ENCODE measurements at regions of chr2 and their contacts with region 1.

Region 1: DNA sequence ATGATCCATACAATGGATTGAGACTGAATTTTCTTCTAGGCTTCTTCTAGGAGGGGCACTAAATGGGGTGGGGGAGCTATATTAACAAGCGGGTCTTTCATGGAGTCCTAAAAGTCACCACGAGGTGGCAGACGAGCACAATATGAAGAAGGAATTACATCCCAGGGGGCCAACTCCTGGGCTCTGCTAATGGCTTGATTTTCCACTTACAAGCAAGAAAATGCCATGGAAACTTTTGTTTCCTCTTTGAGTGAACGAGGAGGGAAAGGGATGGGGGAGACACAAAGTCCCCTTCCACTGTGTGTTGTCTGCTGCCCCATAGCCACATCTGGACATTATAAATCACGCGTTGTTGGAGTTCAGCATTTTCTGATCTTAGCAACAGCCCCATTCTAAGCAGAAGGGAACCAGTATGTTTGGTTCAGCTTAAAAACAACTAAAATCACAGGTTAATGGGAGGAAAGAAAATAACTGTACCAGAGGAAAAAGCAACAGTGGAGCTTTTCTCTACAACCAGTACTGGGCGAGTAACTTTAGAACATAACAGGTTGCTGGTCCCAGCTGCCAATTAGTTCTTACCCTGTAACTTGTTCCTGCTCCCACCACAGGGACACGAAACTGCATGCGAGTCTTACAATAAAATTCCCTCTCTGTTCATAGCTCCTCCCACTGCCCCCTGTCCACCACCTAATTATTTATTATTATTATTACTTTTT is 285.0 kb upstream of the PARD3B start:
- DNase-seq: peak; percentile 57 to 84
- H3K4me3 ChIP-seq: no peak overlapping the region
- H3K27ac ChIP-seq: no peak overlapping the region
- H3K4me1 ChIP-seq: peaks cover 2 to 11% (median 6%) of the 10 kb centered on the region in 4 experiments; a peak in 4 of 7 replicates
- H3K27me3 ChIP-seq: no peaks in the 10 kb centered on the region
- CTCF ChIP-seq: peak; percentile 34 to 91 (median 73)
- EP300 ChIP-seq: no peak
- POLR2A ChIP-seq: no peak
- RAD21 ChIP-seq: peak; percentile 89

Region 2: GRCh38 chr2:204108330-204108751 is 152.0 kb before region 1 on chr2:
- CTCF ChIA-PET with region 1: interaction called, 46 read pairs
- POLR2A ChIA-PET with region 1: no interaction called
- DNase-seq: no peak
- H3K4me3 ChIP-seq: no peak overlapping the region
- H3K27ac ChIP-seq: no peak overlapping the region
- H3K4me1 ChIP-seq: peaks cover 0 to 5% (median 0%) of the 10 kb centered on the region in 4 experiments; a peak in 3 of 7 replicates
- H3K27me3 ChIP-seq: no peaks in the 10 kb centered on the region
- CTCF ChIP-seq: peak; percentile 46 to 59 (median 58)
- EP300 ChIP-seq: no peak
- POLR2A ChIP-seq: no peak
- RAD21 ChIP-seq: peak; percentile 78 to 82

Region 3: GRCh38 chr2:204177977-204178540 is 82.3 kb before region 1 on chr2:
- CTCF ChIA-PET with region 1: interaction called, 13 read pairs
- POLR2A ChIA-PET with region 1: no interaction called
- DNase-seq: peak; percentile 29 to 86
- H3K4me3 ChIP-seq: no peak overlapping the region
- H3K27ac ChIP-seq: no peak overlapping the region
- H3K4me1 ChIP-seq: no peaks in the 10 kb centered on the region
- H3K27me3 ChIP-seq: peaks cover 0 to 1% (median 0%) of the 10 kb centered on the region in 4 experiments; a peak in 1 of 7 replicates
- CTCF ChIP-seq: peak; percentile 41 to 70 (median 64)
- EP300 ChIP-seq: no peak
- POLR2A ChIP-seq: no peak
- RAD21 ChIP-seq: peak; percentile 56 to 70

Region 4: GRCh38 chr2:204289066-204289465 is 28.7 kb after region 1 on chr2:
- CTCF ChIA-PET with region 1: interaction called, 17 read pairs
- POLR2A ChIA-PET with region 1: no interaction called
- DNase-seq: no peak
- H3K4me3 ChIP-seq: no peak overlapping the region
- H3K27ac ChIP-seq: no peak overlapping the region
- H3K4me1 ChIP-seq: peaks cover 0 to 2% (median 1%) of the 10 kb centered on the region in 4 experiments; a peak in 3 of 7 replicates
- H3K27me3 ChIP-seq: no peaks in the 10 kb centered on the region; a peak in 1 of 7 replicates
- CTCF ChIP-seq: no peak
- EP300 ChIP-seq: no peak
- POLR2A ChIP-seq: no peak
- RAD21 ChIP-seq: no peak

Region 5: GRCh38 chr2:204312105-204312504 is 51.8 kb after region 1 on chr2:
- CTCF ChIA-PET with region 1: interaction called, 10 read pairs
- POLR2A ChIA-PET with region 1: no interaction called
- DNase-seq: no peak
- H3K4me3 ChIP-seq: no peak overlapping the region
- H3K27ac ChIP-seq: no peak overlapping the region
- H3K4me1 ChIP-seq: peaks cover 2 to 23% (median 12%) of the 10 kb centered on the region in 4 experiments; a peak in 6 of 7 replicates
- H3K27me3 ChIP-seq: no peaks in the 10 kb centered on the region
- CTCF ChIP-seq: no peak
- EP300 ChIP-seq: no peak
- POLR2A ChIP-seq: no peak
- RAD21 ChIP-seq: no peak

Region 6: DNA sequence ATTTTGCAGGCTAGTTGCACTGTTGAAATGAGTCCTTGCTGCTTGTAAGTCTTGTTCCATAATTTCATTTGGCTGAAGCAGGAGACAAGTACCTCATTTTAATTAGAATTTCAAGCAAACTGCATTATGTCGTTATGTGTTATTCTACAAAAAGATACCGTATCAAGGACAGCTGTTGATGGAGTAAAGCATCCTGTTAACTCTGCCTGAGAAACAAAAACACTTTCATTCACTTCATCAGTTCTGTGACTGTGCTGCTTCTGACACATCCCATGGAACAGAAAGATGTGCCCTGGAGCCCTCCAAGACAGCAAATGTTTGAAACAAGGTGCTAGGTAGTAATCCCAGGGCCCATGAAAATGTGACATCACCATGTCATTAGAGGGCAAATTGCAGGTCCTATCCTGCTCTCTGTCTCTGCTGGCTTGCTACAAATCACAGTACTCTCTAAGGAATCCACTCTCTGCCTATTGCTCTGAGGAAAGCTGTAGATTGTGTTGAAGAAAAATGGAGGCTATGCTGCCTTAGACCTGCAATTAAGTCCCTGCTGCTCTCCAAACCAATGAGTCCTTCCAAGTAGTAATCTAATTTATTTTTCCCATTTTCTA is 75.2 kb after region 1 on chr2:
- CTCF ChIA-PET with region 1: interaction called, 11 read pairs
- POLR2A ChIA-PET with region 1: no interaction called
- DNase-seq: no peak
- H3K4me3 ChIP-seq: no peak overlapping the region
- H3K27ac ChIP-seq: no peak overlapping the region
- H3K4me1 ChIP-seq: peaks cover 0 to 4% (median 0%) of the 10 kb centered on the region in 4 experiments; a peak in 1 of 7 replicates
- H3K27me3 ChIP-seq: no peaks in the 10 kb centered on the region
- CTCF ChIP-seq: no peak
- EP300 ChIP-seq: no peak
- POLR2A ChIP-seq: no peak
- RAD21 ChIP-seq: no peak

Measured in H1 (cell line).